AG04449 (cell line): ENCODE measurements at regions of chr10 and their contacts with region 1.

Region 1: GRCh38 chr10:119542988-119543813 is 682 bp upstream of the RGS10 start:
- DNase-seq: no peak
- H3K4me3 ChIP-seq: peak overlapping the region; percentile 69
- CTCF ChIP-seq: peak; percentile 51

Region 2: DNA sequence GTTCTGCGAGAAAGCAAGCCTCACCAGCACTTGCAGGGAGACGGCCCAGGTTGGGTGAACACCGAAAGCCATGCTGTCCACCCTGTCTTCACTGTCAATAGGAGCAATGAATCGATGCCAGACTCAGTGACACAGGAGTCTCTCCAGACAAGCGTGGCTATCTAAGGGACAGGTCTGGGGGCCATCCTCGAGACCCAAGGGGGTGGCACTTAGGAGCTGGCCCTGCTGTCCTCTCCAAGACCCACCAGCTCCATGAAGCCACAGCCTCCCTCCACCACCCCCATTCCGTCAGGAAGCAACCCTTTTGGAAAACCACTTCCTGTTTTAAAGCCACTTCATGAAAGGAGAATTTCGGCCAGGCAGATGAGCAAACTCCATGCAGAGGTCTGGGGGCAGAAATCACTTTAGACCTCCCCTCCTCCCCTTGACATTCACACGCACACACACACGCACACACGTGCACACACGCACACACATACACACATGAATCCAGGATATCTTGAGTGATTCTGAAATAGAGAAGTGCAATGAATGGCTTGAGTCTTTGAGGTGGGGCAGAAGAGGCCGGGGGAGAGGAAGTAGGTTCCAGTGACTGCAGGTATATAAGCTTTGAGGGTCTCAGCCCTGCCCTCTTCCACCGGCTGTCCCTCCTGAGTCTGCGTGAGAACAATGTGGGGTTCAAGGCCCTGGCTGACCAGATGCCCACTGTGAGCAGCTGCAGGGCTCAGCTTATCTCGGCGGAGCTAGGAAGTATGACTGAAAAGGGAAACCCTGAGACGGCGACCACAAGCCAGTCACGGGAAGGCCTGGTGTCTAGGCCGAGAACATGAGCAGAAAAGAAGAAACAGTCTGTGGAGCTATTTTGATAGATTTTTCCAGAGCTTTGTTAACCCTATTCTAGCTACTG is 25.7 kb before region 1 on chr10:
- CTCF ChIA-PET with region 1: interaction called, 11 read pairs
- POLR2A ChIA-PET with region 1: interaction called, 9 read pairs
- DNase-seq: no peak
- H3K4me3 ChIP-seq: no peak overlapping the region
- CTCF ChIP-seq: no peak

Region 3: GRCh38 chr10:119526621-119527592 is 16.3 kb before region 1 on chr10:
- CTCF ChIA-PET with region 1: interaction called, 16 read pairs
- POLR2A ChIA-PET with region 1: interaction called, 4 read pairs
- DNase-seq: no peak
- H3K4me3 ChIP-seq: no peak overlapping the region
- CTCF ChIP-seq: peak; percentile 17

Region 4: DNA sequence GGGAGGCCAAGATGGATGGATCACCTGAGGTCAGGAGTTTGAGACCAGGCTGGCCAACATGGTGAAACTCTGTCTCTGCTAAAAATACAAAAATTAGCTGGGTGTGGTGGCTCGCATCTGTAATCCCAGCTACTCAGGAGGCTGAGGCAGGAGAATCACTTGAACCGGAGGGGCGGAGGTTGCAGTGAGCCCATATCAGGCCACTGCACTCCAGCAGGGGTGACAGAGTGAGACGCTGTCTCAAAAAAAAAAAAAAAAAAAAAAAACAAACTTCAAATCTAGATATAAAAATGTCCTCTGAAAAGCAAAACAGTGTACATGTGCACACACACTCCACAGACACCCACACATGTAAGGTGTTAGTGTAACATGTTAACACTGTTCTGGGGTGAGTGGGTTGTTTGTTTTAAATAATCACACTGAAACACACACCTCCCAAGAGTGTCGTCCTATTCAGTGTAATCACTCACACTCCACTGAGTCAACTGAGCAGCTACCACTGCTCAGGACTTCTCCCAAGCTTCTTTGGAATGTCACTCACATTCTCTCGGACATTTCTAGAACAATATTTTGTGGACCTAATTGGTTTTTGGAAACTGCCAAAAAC is 12.1 kb after region 1 on chr10:
- CTCF ChIA-PET with region 1: interaction called, 13 read pairs
- POLR2A ChIA-PET with region 1: interaction called, 4 read pairs
- DNase-seq: no peak
- H3K4me3 ChIP-seq: no peak overlapping the region
- CTCF ChIP-seq: no peak

Region 5: DNA sequence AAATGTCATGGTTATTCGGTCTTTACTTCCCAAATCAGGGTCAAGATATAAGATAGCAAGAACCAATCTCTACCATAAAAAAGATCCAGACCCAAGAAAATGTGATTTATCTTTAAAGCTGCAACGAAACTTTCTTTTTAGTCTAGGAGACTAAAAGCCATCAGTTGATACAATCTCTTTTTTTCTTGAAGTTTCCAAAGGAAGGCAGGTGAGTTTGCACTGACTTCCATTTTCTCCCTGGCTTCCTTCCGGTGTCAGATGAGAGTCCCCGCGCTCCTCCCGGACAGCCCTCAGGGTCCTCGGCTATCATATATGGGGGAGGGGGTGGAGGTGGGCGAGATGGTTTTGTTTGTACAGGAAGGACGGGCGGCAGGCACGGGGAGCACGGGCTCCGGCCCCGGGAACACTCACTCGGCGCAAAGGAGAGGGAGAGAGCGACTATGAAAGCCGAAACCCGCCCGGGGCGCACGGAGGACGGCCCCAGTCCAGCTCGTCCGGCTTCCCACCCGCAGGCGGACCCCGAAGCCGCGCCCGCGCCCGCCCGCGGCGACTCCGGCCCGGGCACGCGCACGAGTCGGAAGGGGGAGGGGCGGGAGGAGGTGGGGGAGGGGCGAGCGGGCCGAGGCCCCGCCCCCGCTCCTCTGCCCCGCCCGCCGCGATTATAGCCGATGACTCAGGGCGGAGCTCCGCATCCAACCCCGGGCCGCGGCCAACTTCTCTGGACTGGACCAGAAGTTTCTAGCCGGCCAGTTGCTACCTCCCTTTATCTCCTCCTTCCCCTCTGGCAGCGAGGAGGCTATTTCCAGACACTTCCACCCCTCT is 107.7 kb after region 1 on chr10 and contains the start of gene BAG3:
- CTCF ChIA-PET with region 1: no interaction called
- POLR2A ChIA-PET with region 1: interaction called, 10 read pairs
- DNase-seq: peak; percentile 31
- H3K4me3 ChIP-seq: peak within 1 kb of the TSS; percentile 93
- CTCF ChIP-seq: no peak

Region 6: GRCh38 chr10:119686439-119687191 is 143.4 kb after region 1 on chr10:
- CTCF ChIA-PET with region 1: no interaction called
- POLR2A ChIA-PET with region 1: no interaction called
- DNase-seq: peak; percentile 34
- H3K4me3 ChIP-seq: peak overlapping the region; percentile 44
- CTCF ChIP-seq: peak; percentile 90